ENCODE measurements at regions of chr22 and their contacts with region 1.

Region 1: GRCh38 chr22:20298803-20299735 is 20.8 kb downstream of the DGCR6L start:
- DNase-seq: peak; percentile 96
- ATAC-seq: peak; percentile 85
- H3K4me3 Mint-ChIP-seq: peak overlapping the region; percentile 65
- H3K27ac Mint-ChIP-seq: no peak overlapping the region
- H3K4me1 Mint-ChIP-seq: peaks cover 6% of the 10 kb centered on the region; the same call in 1 of the 2 replicates
- H3K27me3 Mint-ChIP-seq: peaks cover 53% of the 10 kb centered on the region
- CTCF ChIP-seq: no peak

Region 2: GRCh38 chr22:20319745-20320658 is 20.9 kb after region 1 on chr22 and contains the start of gene DGCR6L:
- CTCF ChIA-PET with region 1: interaction called, 14 read pairs
- POLR2A ChIA-PET with region 1: no interaction called
- DNase-seq: peak; percentile 97
- ATAC-seq: peak; percentile 70
- H3K4me3 Mint-ChIP-seq: peak within 1 kb of the TSS; percentile 91
- H3K27ac Mint-ChIP-seq: peak within 1 kb of the TSS; percentile 73
- H3K4me1 Mint-ChIP-seq: peaks cover 37% of the 10 kb centered on the region
- H3K27me3 Mint-ChIP-seq: no peaks in the 10 kb centered on the region
- CTCF ChIP-seq: no peak
- total RNA-seq, gene DGCR6L: 61.9 to 68.5 TPM (median 63.6 TPM) in 3 replicates